HepG2 (cell line): ENCODE measurements at regions of chr2 and their contacts with region 1.

Region 1: GRCh38 chr2:164917296-164917903 is 37.9 kb downstream of the SLC38A11 start:
- DNase-seq: peak; percentile 74
- ATAC-seq: peak; percentile 61
- H3K4me3 ChIP-seq: no peak overlapping the region
- H3K27ac ChIP-seq: no peak overlapping the region
- H3K4me1 ChIP-seq: peaks cover 56% of the 10 kb centered on the region
- H3K27me3 ChIP-seq: no peaks in the 10 kb centered on the region
- CTCF ChIP-seq: peak; percentile 90
- EP300 ChIP-seq: 0 out of 4 replicates have a peak, but pooled peaks of 1 of the 2 experiments have one; percentile 5
- POLR2A ChIP-seq: no peak
- RAD21 ChIP-seq: peak; percentile 93

Region 2: GRCh38 chr2:164625378-164625971 is 291.9 kb before region 1 on chr2:
- CTCF ChIA-PET with region 1: no interaction called
- POLR2A ChIA-PET with region 1: no interaction called
- in situ Hi-C with region 1: no loop called
- intact Hi-C with region 1: no loop called
- DNase-seq: no peak
- ATAC-seq: no peak
- H3K4me3 ChIP-seq: no peak overlapping the region
- H3K27ac ChIP-seq: no peak overlapping the region
- H3K4me1 ChIP-seq: peaks cover 34% of the 10 kb centered on the region
- H3K27me3 ChIP-seq: peaks cover 0 to 16% of the 10 kb centered on the region in 2 experiments; a peak in 1 of 5 replicates
- CTCF ChIP-seq: no peak
- EP300 ChIP-seq: no peak
- POLR2A ChIP-seq: no peak
- RAD21 ChIP-seq: no peak

Region 3: DNA sequence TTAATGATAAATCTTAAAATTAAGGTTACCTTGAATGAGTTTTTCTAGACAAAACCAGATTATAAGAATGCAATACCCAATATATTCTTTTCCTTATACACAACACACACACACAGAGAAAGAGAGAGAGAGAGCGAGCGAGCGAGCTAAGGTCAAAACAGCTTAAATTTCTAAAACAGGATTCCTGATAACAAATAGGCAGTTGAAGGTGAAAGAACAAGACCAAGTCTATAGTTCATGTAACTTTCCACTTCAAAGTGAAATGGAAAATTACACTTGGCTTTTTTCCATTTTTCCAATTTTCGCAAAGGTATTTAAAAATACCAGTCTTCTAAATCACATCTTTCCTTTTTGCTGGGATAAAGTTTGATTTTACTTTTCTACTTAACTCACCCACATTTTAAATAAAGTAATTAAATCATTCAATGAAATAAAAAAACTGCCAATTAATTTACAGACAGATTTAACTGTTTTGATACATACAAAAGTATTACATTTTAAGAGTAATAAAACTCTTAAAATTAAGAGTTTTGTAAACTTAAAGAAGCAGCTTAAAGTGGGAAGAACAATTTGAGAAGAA is 174.6 kb before region 1 on chr2:
- CTCF ChIA-PET with region 1: interaction called, 50 read pairs
- POLR2A ChIA-PET with region 1: interaction called, 4 read pairs
- in situ Hi-C with region 1: loop called (anchors 5 kb)
- intact Hi-C with region 1: loop called (anchors 1 kb)
- DNase-seq: peak; percentile 95
- ATAC-seq: peak; percentile 70
- H3K4me3 ChIP-seq: peak overlapping the region in 2 of 3 experiments; percentile 1 to 17; a peak in 3 of 6 replicates
- H3K27ac ChIP-seq: peak overlapping the region; percentile 86
- H3K4me1 ChIP-seq: peaks cover 100% of the 10 kb centered on the region
- H3K27me3 ChIP-seq: no peaks in the 10 kb centered on the region
- CTCF ChIP-seq: no peak
- EP300 ChIP-seq: peak; percentile 80 to 100; a peak in 3 of 4 replicates
- POLR2A ChIP-seq: no peak
- RAD21 ChIP-seq: no peak

Region 4: GRCh38 chr2:164782323-164782722 is 135.1 kb before region 1 on chr2:
- CTCF ChIA-PET with region 1: no interaction called
- POLR2A ChIA-PET with region 1: no interaction called
- in situ Hi-C with region 1: no loop called
- intact Hi-C with region 1: no loop called
- DNase-seq: no peak
- ATAC-seq: no peak
- H3K4me3 ChIP-seq: no peak overlapping the region
- H3K27ac ChIP-seq: no peak overlapping the region
- H3K4me1 ChIP-seq: peaks cover 14% of the 10 kb centered on the region
- H3K27me3 ChIP-seq: no peaks in the 10 kb centered on the region
- CTCF ChIP-seq: no peak
- EP300 ChIP-seq: no peak
- POLR2A ChIP-seq: no peak
- RAD21 ChIP-seq: no peak

Region 5: GRCh38 chr2:164906947-164907346 is 10.5 kb before region 1 on chr2:
- CTCF ChIA-PET with region 1: no interaction called
- POLR2A ChIA-PET with region 1: no interaction called
- in situ Hi-C with region 1: no loop called
- intact Hi-C with region 1: no loop called
- DNase-seq: no peak
- ATAC-seq: no peak
- H3K4me3 ChIP-seq: no peak overlapping the region
- H3K27ac ChIP-seq: no peak overlapping the region
- H3K4me1 ChIP-seq: peaks cover 27% of the 10 kb centered on the region
- H3K27me3 ChIP-seq: no peaks in the 10 kb centered on the region
- CTCF ChIP-seq: no peak
- EP300 ChIP-seq: no peak
- POLR2A ChIP-seq: no peak
- RAD21 ChIP-seq: no peak

Region 6: GRCh38 chr2:165003433-165004130 is 86.2 kb after region 1 on chr2:
- CTCF ChIA-PET with region 1: no interaction called
- POLR2A ChIA-PET with region 1: no interaction called
- in situ Hi-C with region 1: no loop called
- intact Hi-C with region 1: no loop called
- DNase-seq: no peak
- ATAC-seq: peak; percentile 48; the same call in 2 of the 3 replicates
- H3K4me3 ChIP-seq: no peak overlapping the region
- H3K27ac ChIP-seq: no peak overlapping the region
- H3K4me1 ChIP-seq: no peaks in the 10 kb centered on the region
- H3K27me3 ChIP-seq: 0 out of 5 replicates have a peak, but pooled peaks cover 0 to 5% of the 10 kb centered on the region in 2 experiments
- CTCF ChIP-seq: no peak
- EP300 ChIP-seq: no peak
- POLR2A ChIP-seq: no peak
- RAD21 ChIP-seq: no peak